AG04449 (cell line): ENCODE measurements at regions of chr3 and their contacts with region 1.

Region 1: GRCh38 chr3:49539659-49540560 is 14.4 kb upstream of the BSN start:
- DNase-seq: peak; percentile 49
- H3K4me3 ChIP-seq: peak overlapping the region; percentile 60
- CTCF ChIP-seq: peak; percentile 88

Region 2: DNA sequence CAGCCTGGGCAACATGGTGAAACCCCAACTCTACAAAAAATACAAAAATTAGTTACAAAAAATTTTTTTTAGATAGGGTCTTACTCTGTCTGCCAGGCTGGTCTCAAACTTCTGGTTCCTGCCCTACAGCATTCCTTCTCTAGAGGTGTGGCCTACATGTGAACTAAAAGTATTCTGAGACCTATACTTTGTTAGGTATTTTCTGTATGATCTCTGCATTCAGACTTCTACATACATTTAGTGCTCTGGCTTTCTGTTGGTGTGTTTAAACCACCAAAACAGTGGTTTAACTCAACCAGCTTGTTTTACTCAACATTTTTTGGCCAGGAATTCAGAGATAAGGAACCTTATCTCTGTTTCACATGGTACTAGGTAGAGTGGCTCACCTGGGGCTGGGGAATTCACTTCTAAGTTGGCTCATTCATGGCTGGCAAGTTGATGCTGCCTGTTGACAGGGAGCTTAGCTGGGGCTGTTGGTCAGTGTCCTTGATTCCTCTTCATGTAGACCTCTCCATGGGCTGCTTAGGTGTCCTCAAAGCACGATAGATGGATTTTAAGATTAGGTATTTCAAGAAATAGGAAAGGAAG is 27.0 kb before region 1 on chr3:
- CTCF ChIA-PET with region 1: interaction called, 161 read pairs
- POLR2A ChIA-PET with region 1: no interaction called
- DNase-seq: no peak
- H3K4me3 ChIP-seq: no peak overlapping the region
- CTCF ChIP-seq: no peak

Region 3: GRCh38 chr3:49553692-49554632 is 14.1 kb after region 1 on chr3 and contains the start of gene BSN:
- CTCF ChIA-PET with region 1: interaction called, 87 read pairs
- POLR2A ChIA-PET with region 1: interaction called, 6 read pairs
- DNase-seq: peak; percentile 9
- H3K4me3 ChIP-seq: peak within 1 kb of the TSS; percentile 77
- CTCF ChIP-seq: no peak

Region 4: GRCh38 chr3:49656541-49657112 is 116.7 kb after region 1 on chr3:
- CTCF ChIA-PET with region 1: interaction called, 30 read pairs
- POLR2A ChIA-PET with region 1: no interaction called
- DNase-seq: no peak
- H3K4me3 ChIP-seq: no peak overlapping the region
- CTCF ChIP-seq: peak; percentile 59

Region 5: GRCh38 chr3:49673715-49674496 is 134.0 kb after region 1 on chr3 and contains the start of gene APEH:
- CTCF ChIA-PET with region 1: interaction called, 441 read pairs
- POLR2A ChIA-PET with region 1: interaction called, 8 read pairs
- DNase-seq: peak; percentile 78
- H3K4me3 ChIP-seq: peak within 1 kb of the TSS; percentile 83
- CTCF ChIP-seq: no peak

Region 6: DNA sequence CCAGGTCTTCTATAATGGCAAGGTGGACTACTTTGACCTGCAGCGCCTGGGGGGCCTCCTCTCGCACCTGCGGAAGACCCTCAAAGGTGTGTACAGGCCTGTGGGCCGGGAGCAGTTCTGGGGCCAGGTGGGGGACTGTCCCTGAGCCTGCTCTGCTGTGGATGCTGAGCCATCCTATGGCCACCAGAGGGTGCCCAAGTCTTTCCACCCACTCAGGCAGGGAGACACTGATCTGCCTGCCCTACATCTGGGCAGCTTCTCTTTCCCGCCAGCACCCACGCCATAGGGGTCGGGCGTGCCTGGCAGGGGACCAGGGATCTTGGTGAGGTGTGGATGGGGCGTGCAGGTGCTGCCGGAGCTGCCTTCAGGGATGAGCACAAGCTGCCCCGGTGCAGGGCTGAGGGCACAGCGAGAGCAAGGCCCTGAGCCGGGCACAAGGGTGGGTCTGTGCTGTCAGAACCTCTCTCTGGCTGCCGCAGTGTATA is 163.6 kb after region 1 on chr3:
- CTCF ChIA-PET with region 1: interaction called, 49 read pairs
- POLR2A ChIA-PET with region 1: no interaction called
- DNase-seq: no peak
- H3K4me3 ChIP-seq: no peak overlapping the region
- CTCF ChIP-seq: peak; percentile 90